ENCODE measurements at regions of chr2 and their contacts with region 1.

Region 1: GRCh38 chr2:231674587-231675338 is 33.6 kb upstream of the PTMA start:
- DNase-seq: peak in 3 of 4 donors; percentile 73 to 88 (median 75)
- ATAC-seq: peak; percentile 35
- H3K4me3 ChIP-seq: no peak overlapping the region
- H3K27ac ChIP-seq: peak overlapping the region; percentile 76 to 92
- H3K4me1 ChIP-seq: peaks cover 33 to 47% of the 10 kb centered on the region in 2 donors
- H3K27me3 ChIP-seq: no peaks in the 10 kb centered on the region
- CTCF ChIP-seq: peak; percentile 65 to 80

Region 2: DNA sequence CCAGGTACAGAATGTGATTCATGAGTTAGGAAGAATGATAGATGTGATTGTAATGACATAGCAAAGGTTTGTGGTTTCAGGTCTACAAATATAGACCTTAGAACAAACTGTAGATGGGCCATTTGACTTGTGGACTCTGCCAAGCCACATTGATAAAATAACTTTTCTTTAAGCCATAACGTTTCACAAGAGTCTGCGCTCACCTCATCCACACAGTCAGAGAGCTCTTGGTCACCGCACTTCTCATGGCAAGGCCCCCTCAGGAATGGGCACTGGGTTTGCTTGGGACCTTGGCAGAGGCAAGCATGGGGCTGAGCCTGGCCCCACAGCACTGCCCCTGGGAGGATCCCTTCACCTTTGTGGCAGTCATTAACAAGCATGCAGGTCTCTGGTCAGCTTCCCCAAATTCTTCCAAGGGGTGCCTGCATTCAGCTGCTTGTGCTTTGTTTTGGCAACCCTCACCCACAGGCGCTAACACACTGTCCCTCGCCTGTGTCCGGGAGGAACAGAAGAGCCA is 462.4 kb before region 1 on chr2:
- intact Hi-C with region 1: no loop called
- DNase-seq: no peak
- ATAC-seq: no peak
- H3K4me3 ChIP-seq: no peak overlapping the region
- H3K27ac ChIP-seq: no peak overlapping the region
- H3K4me1 ChIP-seq: no peaks in the 10 kb centered on the region
- H3K27me3 ChIP-seq: no peaks in the 10 kb centered on the region
- CTCF ChIP-seq: no peak

Region 3: GRCh38 chr2:231514103-231514950 is 160.4 kb before region 1 on chr2:
- intact Hi-C with region 1: no loop called
- DNase-seq: peak; percentile 96 to 99 (median 98)
- ATAC-seq: peak; percentile 100
- H3K4me3 ChIP-seq: peak overlapping the region; percentile 66 to 68
- H3K27ac ChIP-seq: peak overlapping the region; percentile 83 to 89
- H3K4me1 ChIP-seq: peaks cover 0 to 8% of the 10 kb centered on the region in 2 donors
- H3K27me3 ChIP-seq: no peaks in the 10 kb centered on the region
- CTCF ChIP-seq: no peak

Region 4: DNA sequence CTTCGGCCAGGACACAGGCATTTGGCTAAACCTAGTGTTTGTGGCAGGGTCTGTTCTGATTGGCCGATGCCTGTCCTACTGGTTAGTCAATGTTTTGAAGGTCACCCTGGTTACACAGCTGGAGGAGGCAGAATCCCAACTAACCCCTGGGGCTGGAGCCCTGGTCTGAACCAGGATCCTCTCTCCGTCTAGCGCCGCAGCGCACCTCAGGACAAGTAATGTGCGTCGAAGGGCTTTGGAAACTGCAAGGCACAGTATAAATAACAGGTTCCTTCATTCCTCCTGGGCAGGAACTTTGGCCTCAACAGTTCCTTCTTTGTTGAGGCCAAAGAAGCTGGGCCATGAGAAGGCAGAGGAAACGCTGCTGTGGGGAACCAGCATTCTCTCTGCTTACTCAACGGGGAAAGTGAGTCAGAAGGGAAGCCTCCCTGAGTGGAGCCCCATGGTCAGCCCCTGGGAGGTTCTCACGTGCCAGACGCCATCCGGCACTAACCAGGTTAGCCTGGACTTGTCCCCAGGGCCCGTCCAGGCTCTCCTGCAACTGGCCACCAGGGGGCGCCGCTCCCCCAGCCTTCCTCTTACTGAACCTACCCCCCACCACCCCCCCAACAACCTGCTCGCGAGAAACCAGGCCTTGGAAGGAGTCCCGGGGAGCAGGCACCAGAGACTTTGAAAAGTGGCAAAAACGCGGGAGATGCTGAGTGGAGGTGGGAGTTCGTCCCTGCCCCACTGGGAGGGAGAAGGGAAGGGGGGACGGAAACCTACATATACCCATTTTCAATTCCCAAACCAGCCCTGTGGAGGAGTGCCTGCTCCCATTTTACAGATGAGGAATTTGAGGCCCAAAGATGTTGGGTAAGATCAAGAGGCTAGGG is 62.3 kb before region 1 on chr2:
- intact Hi-C with region 1: loop called in 1 of 2 experiments (anchors 5 kb)
- DNase-seq: peak; percentile 78 to 97 (median 92)
- ATAC-seq: peak; percentile 79
- H3K4me3 ChIP-seq: no peak overlapping the region
- H3K27ac ChIP-seq: peak overlapping the region; percentile 92 to 94
- H3K4me1 ChIP-seq: peaks cover 26 to 49% of the 10 kb centered on the region in 2 donors
- H3K27me3 ChIP-seq: peaks cover 0 to 22% of the 10 kb centered on the region in 2 donors
- CTCF ChIP-seq: peak; percentile 91 to 98

Region 5: DNA sequence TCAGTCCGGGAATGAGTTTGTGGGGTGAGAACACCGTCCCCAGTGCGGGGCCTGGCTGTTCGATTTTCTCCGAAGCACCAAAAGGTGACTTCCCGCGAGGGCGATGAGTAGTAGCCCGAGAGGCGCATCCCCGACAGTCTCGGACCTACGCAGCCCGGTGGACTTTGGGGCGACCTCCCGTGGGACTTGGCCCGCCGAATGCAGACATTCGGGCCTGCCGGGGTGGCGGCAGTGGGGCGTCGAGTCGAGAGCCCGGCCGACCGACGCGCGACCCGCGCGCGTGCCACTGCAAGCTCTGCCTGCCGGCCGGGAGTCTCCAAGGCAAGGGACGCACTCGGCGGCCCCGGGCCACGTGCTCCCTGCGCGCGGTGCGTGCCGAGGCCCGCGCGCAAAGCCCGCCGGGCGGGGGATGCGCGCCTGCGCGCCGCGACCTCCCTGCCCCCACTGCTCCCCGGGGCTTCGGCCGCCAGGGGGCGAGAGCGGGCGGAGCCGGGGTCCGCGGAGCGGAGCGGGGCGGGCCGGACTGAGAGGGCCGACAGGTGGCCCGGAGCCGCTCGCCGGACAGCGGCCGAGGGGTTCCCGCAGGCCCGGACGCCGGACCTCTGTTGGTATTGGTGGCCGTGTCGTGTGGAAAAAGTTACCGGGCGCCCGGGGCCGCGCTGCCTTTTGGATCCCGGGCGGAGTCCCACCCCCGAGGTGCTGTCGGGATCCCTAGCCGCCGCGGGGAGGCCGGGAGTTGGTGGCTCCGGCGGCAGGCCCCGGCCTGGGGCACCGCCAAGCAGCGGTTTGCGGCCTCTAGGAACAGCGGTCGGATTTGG is 35.4 kb after region 1 on chr2:
- intact Hi-C with region 1: loop called in 1 of 2 experiments (anchors 5 kb)
- DNase-seq: peak; percentile 83 to 97 (median 89)
- ATAC-seq: peak; percentile 37
- H3K4me3 ChIP-seq: peak overlapping the region; percentile 82 to 95
- H3K27ac ChIP-seq: peak overlapping the region; percentile 98 to 100
- H3K4me1 ChIP-seq: peaks cover 18 to 40% of the 10 kb centered on the region in 2 donors
- H3K27me3 ChIP-seq: no peaks in the 10 kb centered on the region
- CTCF ChIP-seq: peak; percentile 67 to 85